Psoas muscle (tissue), 8 donors: ENCODE measurements at regions of chr1 and their contacts with region 1.

Region 1: DNA sequence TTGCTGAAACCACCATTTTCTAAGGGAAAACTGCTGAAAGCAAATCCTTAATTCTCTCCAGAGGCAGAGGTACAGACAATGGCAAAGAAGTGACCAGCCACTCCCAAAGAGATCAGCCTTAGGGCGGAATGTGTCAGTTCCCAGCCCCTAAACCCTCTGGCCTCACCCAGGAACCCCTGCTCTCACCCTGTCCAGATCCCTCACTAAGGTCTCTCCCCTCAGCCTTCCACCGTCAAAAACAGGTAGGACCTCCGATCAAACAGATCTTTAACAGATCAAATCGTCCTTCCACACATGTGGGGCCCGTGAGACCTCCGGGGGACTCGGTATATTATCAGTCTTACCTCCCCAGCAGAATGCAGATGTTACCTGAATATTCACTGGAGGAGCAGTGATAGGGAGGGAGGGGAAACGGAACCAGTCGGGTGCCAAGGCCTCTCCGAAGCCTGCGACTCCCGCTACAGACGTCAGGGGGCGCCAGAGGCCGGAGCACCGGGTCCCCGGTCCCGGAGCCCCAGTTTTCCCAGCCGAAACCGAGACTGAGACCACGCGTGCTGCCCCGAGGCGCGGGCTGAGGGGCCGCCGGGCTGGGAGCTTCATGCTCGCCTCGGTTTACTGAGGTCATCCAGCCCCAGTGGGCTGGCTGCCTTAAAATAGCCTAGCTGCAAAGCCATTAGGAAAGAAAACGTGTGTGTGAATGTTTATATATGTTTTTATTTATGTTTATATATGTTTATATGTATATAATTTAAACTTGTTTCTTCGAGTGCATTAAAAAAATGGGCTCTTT is 23.6 kb downstream of the GPA33 start:
- DNase-seq: peak; percentile 72 to 88
- ATAC-seq: peak; percentile 93 to 100 (median 96)
- H3K4me3 ChIP-seq: peak overlapping the region; percentile 59
- H3K27ac ChIP-seq: no peak overlapping the region
- H3K4me1 ChIP-seq: no peaks in the 10 kb centered on the region
- H3K27me3 ChIP-seq: no peaks in the 10 kb centered on the region
- CTCF ChIP-seq: peak; percentile 99

Region 2: GRCh38 chr1:167128261-167129227 is 62.0 kb after region 1 on chr1:
- intact Hi-C with region 1: loop called (anchors 2 to 5 kb)
- DNase-seq: no peak
- ATAC-seq: peak in 1 of 4 donors; percentile 36
- H3K4me3 ChIP-seq: no peak overlapping the region
- H3K27ac ChIP-seq: no peak overlapping the region
- H3K4me1 ChIP-seq: no peaks in the 10 kb centered on the region
- H3K27me3 ChIP-seq: no peaks in the 10 kb centered on the region
- CTCF ChIP-seq: no peak

Region 3: GRCh38 chr1:167207940-167208623 is 141.6 kb after region 1 on chr1:
- intact Hi-C with region 1: loop called (anchors 2 to 5 kb)
- DNase-seq: no peak
- ATAC-seq: peak in 2 of 4 donors; percentile 32 to 66
- H3K4me3 ChIP-seq: no peak overlapping the region
- H3K27ac ChIP-seq: no peak overlapping the region
- H3K4me1 ChIP-seq: no peaks in the 10 kb centered on the region
- H3K27me3 ChIP-seq: no peaks in the 10 kb centered on the region
- CTCF ChIP-seq: no peak

Region 4: DNA sequence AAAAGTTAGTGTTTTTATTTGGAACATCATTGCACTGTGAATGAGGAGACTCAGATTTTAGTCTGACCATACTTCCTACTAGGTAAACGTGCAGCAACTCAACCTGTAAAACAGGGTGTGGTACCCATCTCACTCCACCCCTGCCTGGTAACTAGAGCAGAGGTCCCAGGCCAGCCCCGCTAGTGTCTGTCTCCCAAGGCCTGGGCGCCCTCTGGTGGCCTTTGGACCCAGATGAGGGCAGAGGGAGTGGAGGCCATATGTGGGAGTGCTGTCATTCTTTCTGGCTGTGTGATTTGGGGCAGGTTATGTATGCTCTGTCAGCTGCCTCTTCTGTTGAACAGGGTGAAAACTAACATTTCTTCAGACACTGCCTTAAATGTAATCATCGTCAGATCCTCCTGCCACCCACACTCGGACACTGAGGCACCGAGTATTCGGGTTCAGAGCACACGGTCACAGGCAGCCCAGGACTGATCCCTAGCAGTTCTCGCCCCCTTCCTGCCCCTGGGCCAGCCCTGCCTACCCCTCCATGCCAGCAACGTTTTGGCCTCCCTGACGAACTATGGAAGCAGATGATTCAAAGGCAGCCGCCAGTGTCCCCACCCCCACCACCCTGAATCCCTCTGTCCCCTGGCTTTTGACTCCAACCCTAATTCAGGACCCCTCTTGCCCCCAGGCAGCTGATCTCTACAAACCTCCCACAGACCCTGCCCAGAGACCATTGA is 375.8 kb after region 1 on chr1:
- intact Hi-C with region 1: loop called (anchors 1 to 5 kb)
- DNase-seq: peak; percentile 85 to 91
- ATAC-seq: peak; percentile 96 to 98 (median 97)
- H3K4me3 ChIP-seq: no peak overlapping the region
- H3K27ac ChIP-seq: no peak overlapping the region
- H3K4me1 ChIP-seq: peaks cover 6% of the 10 kb centered on the region
- H3K27me3 ChIP-seq: peaks cover 0 to 6% (median 3%) of the 10 kb centered on the region in 3 donors
- CTCF ChIP-seq: peak; percentile 88

Region 5: DNA sequence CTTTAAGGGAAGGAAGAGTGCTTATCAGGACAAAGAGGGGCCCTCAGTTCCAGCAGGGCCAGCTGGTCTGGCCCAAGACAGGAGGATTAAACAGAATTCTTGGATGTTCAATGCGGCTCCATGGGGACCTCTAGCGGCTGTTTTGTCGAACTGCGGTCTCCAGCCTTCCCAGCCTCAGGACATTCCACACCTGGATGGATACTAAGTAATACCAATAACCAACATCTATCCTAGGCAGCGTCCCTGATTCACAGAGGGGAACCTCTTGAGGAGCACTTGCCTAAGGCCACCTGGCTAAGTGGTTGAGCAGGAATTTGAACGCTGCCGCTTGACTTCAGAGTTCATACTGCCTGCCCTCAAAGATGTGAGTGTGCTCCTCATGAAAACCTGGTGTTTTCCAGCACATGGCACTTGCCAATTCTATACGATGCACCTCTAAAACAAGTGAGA is 467.3 kb after region 1 on chr1:
- intact Hi-C with region 1: loop called in 1 of 2 experiments (anchors 5 kb)
- DNase-seq: peak; percentile 58 to 65
- ATAC-seq: peak; percentile 76 to 91 (median 78)
- H3K4me3 ChIP-seq: no peak overlapping the region
- H3K27ac ChIP-seq: no peak overlapping the region
- H3K4me1 ChIP-seq: no peaks in the 10 kb centered on the region
- H3K27me3 ChIP-seq: no peaks in the 10 kb centered on the region
- CTCF ChIP-seq: peak; percentile 84